ENCODE measurements at regions of chr14 and their contacts with region 1.

Region 1: GRCh38 chr14:24332268-24332993 is 2.4 kb downstream of the ADCY4 start:
- DNase-seq: peak; percentile 45
- H3K4me3 ChIP-seq: no peak overlapping the region
- H3K27ac ChIP-seq: no peak overlapping the region
- H3K4me1 ChIP-seq: peaks cover 29% of the 10 kb centered on the region
- H3K27me3 ChIP-seq: no peaks in the 10 kb centered on the region
- CTCF ChIP-seq: peak; percentile 55 to 72
- POLR2A ChIP-seq: no peak

Region 2: GRCh38 chr14:24241829-24242443 is 90.5 kb before region 1 on chr14:
- CTCF ChIA-PET with region 1: interaction called, 18 read pairs
- POLR2A ChIA-PET with region 1: no interaction called
- dilution Hi-C with region 1: no loop called
- intact Hi-C with region 1: no loop called
- DNase-seq: no peak
- H3K4me3 ChIP-seq: peak overlapping the region; percentile 31 to 67 (median 57)
- H3K27ac ChIP-seq: peak overlapping the region; percentile 98
- H3K4me1 ChIP-seq: peaks cover 30% of the 10 kb centered on the region
- H3K27me3 ChIP-seq: no peaks in the 10 kb centered on the region
- CTCF ChIP-seq: peak; percentile 16 to 75
- POLR2A ChIP-seq: no peak

Region 3: GRCh38 chr14:24351517-24351916 is 19.1 kb after region 1 on chr14:
- CTCF ChIA-PET with region 1: interaction called, 57 read pairs
- POLR2A ChIA-PET with region 1: no interaction called
- dilution Hi-C with region 1: no loop called
- intact Hi-C with region 1: no loop called
- DNase-seq: peak; percentile 18
- H3K4me3 ChIP-seq: no peak overlapping the region
- H3K27ac ChIP-seq: no peak overlapping the region
- H3K4me1 ChIP-seq: no peaks in the 10 kb centered on the region
- H3K27me3 ChIP-seq: peaks cover 30 to 35% of the 10 kb centered on the region in 2 experiments
- CTCF ChIP-seq: peak in 1 of 2 donors; percentile 5
- POLR2A ChIP-seq: no peak

Region 4: GRCh38 chr14:24398653-24399446 is 66.4 kb after region 1 on chr14 and contains the start of gene NYNRIN:
- CTCF ChIA-PET with region 1: interaction called, 20 read pairs
- POLR2A ChIA-PET with region 1: no interaction called
- dilution Hi-C with region 1: no loop called
- intact Hi-C with region 1: no loop called
- DNase-seq: peak; percentile 58
- H3K4me3 ChIP-seq: peak within 1 kb of the TSS; percentile 69 to 78 (median 69)
- H3K27ac ChIP-seq: no peak within 1 kb of the TSS
- H3K4me1 ChIP-seq: peaks cover 31% of the 10 kb centered on the region
- H3K27me3 ChIP-seq: no peaks in the 10 kb centered on the region
- CTCF ChIP-seq: no peak
- POLR2A ChIP-seq: peak; percentile 48
- total RNA-seq, gene NYNRIN: 42.8 and 45.1 TPM in 2 replicates

Region 5: DNA sequence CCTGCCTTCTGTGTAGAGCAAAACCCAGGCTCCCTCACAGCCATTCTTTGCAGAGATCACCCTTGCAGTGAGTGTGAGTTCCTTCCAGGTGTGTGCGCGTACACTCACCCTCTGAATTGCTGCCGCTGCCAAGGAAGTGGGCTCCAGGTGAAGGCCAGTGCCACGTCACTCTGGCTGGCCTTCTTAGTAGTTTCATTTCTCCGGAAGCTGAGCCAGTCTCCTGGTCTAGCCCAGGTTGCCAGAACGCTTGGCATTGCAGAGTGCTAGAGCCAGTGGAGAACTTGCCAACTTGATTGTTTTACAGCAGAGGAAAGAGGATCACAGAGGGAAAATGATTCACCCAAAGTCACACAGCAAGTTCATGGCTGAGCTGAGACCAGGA is 86.1 kb after region 1 on chr14:
- CTCF ChIA-PET with region 1: interaction called, 73 read pairs
- POLR2A ChIA-PET with region 1: no interaction called
- dilution Hi-C with region 1: no loop called
- intact Hi-C with region 1: no loop called
- DNase-seq: peak; percentile 78
- H3K4me3 ChIP-seq: no peak overlapping the region
- H3K27ac ChIP-seq: peak overlapping the region; percentile 65
- H3K4me1 ChIP-seq: peaks cover 21% of the 10 kb centered on the region
- H3K27me3 ChIP-seq: no peaks in the 10 kb centered on the region
- CTCF ChIP-seq: no peak
- POLR2A ChIP-seq: peak; percentile 32

Region 6: GRCh38 chr14:24442273-24443052 is 110.0 kb after region 1 on chr14 and contains the start of gene SDR39U1:
- CTCF ChIA-PET with region 1: interaction called, 811 read pairs
- POLR2A ChIA-PET with region 1: no interaction called
- dilution Hi-C with region 1: no loop called
- intact Hi-C with region 1: no loop called
- DNase-seq: peak; percentile 99
- H3K4me3 ChIP-seq: peak within 1 kb of the TSS; percentile 74 to 88 (median 76)
- H3K27ac ChIP-seq: peak within 1 kb of the TSS; percentile 98
- H3K4me1 ChIP-seq: peaks cover 25% of the 10 kb centered on the region
- H3K27me3 ChIP-seq: no peaks in the 10 kb centered on the region
- CTCF ChIP-seq: no peak
- POLR2A ChIP-seq: peak; percentile 74
- total RNA-seq, gene SDR39U1: 38.6 and 40.2 TPM in 2 replicates